PC-9 (cell line): ENCODE measurements at regions of chr1 and their contacts with region 1.

Region 1: GRCh38 chr1:111553196-111553595 is 49.8 kb upstream of the ADORA3 start:
- DNase-seq: peak in 1 of 2 experiments; percentile 73
- H3K4me3 ChIP-seq: no peak overlapping the region
- H3K27ac ChIP-seq: peak overlapping the region; percentile 5; the same call in 1 of the 2 replicates
- H3K4me1 ChIP-seq: peaks cover 12% of the 10 kb centered on the region
- H3K27me3 ChIP-seq: no peaks in the 10 kb centered on the region
- CTCF ChIP-seq: no peak

Region 2: DNA sequence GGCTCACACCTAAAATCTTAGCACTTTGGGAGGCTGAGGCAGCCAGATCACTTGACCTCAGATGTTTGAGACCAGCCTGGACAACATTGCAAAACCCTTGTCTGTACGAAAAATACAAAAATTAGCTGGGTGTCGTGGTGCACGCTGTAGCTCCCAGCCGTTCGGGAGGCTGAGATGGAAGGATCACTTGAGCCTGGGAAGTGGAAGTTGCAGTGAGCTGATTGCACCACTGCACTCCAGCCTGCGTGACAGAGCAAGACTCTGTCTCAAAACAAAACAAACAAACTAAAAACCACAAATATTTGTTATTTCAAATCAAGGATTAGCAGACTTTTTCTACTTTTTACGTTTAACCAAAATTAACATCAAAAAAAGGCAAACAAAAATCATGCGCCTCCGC is 154.7 kb after region 1 on chr1:
- CTCF ChIA-PET with region 1: no interaction called
- POLR2A ChIA-PET with region 1: interaction called, 14 read pairs
- intact Hi-C with region 1: no loop called
- DNase-seq: no peak
- H3K4me3 ChIP-seq: no peak overlapping the region
- H3K27ac ChIP-seq: no peak overlapping the region
- H3K4me1 ChIP-seq: peaks cover 12% of the 10 kb centered on the region
- H3K27me3 ChIP-seq: no peaks in the 10 kb centered on the region
- CTCF ChIP-seq: no peak